Activated CD4-positive, alpha-beta T cell treated with anti-CD3 and anti-CD28 coated beads for 36 hours (primary cell): ENCODE measurements at regions of chr7 and their contacts with region 1.

Region 1: DNA sequence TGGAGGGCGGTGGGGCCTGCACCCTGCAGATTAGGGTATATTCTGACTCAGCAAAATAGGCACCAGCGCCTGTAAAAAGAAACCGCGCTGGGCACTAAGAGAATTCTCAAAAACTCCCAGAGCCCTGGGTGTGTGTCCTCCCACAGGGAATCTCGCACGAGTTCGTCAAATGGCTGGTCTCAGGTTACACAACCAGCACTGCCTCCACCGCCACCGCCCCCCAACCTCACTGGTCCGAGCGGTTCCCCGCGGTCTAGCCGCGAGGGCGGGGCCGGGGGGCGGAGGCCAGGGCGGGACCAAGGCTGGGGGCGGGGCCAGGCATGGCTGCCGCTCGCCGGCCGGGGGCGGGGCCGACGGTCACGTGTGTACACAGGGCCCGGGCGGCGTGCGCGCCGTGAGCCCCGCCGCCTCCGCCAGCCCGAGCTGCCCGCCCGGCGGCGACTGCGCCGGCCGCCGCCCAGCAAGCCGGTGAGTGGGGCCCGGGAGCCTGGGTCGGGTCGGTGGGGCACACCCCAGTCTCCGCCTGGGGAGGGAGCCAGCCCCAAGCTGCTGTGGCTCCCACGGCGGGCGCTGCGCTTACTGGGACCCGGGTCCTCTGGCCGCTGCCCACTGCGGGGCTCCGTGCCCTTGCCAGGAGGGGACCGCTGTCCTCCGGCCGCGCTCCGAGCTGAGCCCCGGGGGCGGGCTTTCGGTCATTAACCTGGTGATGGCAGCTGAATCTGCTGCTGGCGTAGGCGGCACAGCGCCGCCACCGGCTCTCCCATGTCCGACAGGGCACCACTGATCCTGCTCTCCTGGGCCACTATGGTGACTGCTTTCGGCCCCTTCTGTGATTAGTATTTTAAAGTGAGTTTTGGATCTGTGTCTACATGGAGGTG is at the start of gene GPR146:
- DNase-seq: peak; percentile 96
- ATAC-seq: peak; percentile 88
- H3K4me3 Mint-ChIP-seq: peak within 1 kb of the TSS; percentile 78
- H3K27ac Mint-ChIP-seq: peak within 1 kb of the TSS; percentile 73
- H3K4me1 Mint-ChIP-seq: peaks cover 61% of the 10 kb centered on the region
- H3K27me3 Mint-ChIP-seq: no peaks in the 10 kb centered on the region
- total RNA-seq, gene GPR146: 4.7 to 5.6 TPM

Region 2: GRCh38 chr7:148932-149855 is 895.2 kb before region 1 on chr7:
- CTCF ChIA-PET with region 1: no interaction called
- POLR2A ChIA-PET with region 1: no interaction called
- intact Hi-C with region 1: loop called in 1 of 2 experiments (anchors 5 kb)
- DNase-seq: peak; percentile 98
- ATAC-seq: peak; percentile 99
- H3K4me3 Mint-ChIP-seq: peak overlapping the region; percentile 87
- H3K27ac Mint-ChIP-seq: peak overlapping the region; percentile 97
- H3K4me1 Mint-ChIP-seq: peaks cover 13% of the 10 kb centered on the region
- H3K27me3 Mint-ChIP-seq: no peaks in the 10 kb centered on the region

Region 3: DNA sequence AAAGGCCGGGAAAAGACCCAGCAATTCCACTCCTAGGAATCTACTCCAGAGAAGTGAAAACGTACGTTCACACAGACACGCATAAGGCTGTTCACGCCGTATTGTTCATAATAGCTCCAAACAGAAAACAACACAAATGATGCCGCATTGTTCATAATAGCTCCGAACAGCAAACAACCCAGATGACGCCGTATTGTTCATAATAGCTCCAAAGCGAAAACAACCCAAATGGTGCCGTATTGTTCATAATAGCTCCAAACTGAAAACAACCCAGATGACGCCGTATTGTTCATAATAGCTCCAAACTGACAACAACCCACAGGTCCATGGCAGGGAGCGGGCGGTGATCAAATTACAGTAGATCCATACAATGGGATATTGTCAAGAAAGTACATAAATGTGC is 403.2 kb before region 1 on chr7:
- CTCF ChIA-PET with region 1: no interaction called
- POLR2A ChIA-PET with region 1: no interaction called
- intact Hi-C with region 1: no loop called
- DNase-seq: no peak
- ATAC-seq: no peak
- H3K4me3 Mint-ChIP-seq: no peak overlapping the region
- H3K27ac Mint-ChIP-seq: no peak overlapping the region
- H3K4me1 Mint-ChIP-seq: peaks cover 19% of the 10 kb centered on the region
- H3K27me3 Mint-ChIP-seq: no peaks in the 10 kb centered on the region

Region 4: DNA sequence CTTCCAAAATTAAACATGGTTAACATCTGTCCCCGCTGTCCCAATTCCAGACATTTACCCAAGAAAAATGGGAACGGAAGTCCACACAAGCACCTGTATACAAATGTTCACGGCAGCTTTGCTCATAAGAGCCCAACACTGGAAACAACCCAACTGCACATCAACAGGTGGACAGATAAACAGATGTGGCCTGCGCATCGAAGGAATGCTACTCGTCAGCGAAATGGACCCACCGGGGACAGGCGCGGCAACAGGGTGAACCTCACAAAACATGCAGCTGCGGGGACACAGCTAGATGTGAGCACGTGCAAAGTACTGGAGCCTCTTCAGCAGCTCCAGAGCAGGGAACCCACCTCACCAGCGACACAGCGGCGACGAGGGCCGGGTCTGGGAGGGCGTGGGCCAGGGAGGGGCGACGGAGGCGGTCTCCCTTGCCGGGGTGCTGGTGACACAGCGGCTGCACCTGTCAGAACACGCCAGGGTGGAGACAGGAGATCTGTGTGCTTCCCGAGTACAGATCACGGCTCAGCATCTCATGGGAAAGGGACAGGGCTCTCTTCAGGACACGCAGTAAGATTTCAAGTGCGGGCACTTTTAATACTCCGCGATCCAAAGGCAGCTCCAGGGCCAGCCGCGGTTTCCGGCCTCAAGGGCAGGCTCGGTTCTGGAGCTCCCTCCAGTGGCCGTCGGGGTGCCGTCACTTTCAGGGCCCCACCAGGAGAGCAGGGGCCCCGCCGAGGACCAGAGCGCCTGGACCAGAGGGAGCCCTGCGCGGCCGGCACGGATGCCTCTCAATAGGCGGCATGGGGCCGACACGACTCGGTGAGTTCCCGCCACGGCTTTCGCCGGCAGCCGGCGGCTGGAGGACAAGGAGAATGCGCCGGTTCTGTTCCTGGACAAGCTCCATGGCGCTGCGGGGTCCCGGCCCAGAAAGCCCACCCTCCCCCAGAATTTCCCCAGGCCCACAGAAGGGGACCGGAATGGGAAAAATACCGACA is 21.1 kb after region 1 on chr7:
- CTCF ChIA-PET with region 1: interaction called, 15 read pairs
- POLR2A ChIA-PET with region 1: no interaction called
- intact Hi-C with region 1: no loop called
- DNase-seq: peak; percentile 92
- ATAC-seq: peak; percentile 98
- H3K4me3 Mint-ChIP-seq: peak overlapping the region; percentile 36
- H3K27ac Mint-ChIP-seq: no peak overlapping the region
- H3K4me1 Mint-ChIP-seq: peaks cover 5% of the 10 kb centered on the region
- H3K27me3 Mint-ChIP-seq: peaks cover 2% of the 10 kb centered on the region

Region 5: GRCh38 chr7:1159891-1160668 is 115.7 kb after region 1 on chr7 and contains the start of gene ZFAND2A:
- CTCF ChIA-PET with region 1: interaction called, 3 read pairs
- POLR2A ChIA-PET with region 1: no interaction called
- intact Hi-C with region 1: loop called in 1 of 2 experiments (anchors 5 kb)
- DNase-seq: peak; percentile 99
- ATAC-seq: peak; percentile 98
- H3K4me3 Mint-ChIP-seq: peak within 1 kb of the TSS; percentile 84
- H3K27ac Mint-ChIP-seq: peak within 1 kb of the TSS; percentile 90
- H3K4me1 Mint-ChIP-seq: peaks cover 22% of the 10 kb centered on the region
- H3K27me3 Mint-ChIP-seq: no peaks in the 10 kb centered on the region
- total RNA-seq, gene ZFAND2A: 21.6 to 25.2 TPM

Region 6: DNA sequence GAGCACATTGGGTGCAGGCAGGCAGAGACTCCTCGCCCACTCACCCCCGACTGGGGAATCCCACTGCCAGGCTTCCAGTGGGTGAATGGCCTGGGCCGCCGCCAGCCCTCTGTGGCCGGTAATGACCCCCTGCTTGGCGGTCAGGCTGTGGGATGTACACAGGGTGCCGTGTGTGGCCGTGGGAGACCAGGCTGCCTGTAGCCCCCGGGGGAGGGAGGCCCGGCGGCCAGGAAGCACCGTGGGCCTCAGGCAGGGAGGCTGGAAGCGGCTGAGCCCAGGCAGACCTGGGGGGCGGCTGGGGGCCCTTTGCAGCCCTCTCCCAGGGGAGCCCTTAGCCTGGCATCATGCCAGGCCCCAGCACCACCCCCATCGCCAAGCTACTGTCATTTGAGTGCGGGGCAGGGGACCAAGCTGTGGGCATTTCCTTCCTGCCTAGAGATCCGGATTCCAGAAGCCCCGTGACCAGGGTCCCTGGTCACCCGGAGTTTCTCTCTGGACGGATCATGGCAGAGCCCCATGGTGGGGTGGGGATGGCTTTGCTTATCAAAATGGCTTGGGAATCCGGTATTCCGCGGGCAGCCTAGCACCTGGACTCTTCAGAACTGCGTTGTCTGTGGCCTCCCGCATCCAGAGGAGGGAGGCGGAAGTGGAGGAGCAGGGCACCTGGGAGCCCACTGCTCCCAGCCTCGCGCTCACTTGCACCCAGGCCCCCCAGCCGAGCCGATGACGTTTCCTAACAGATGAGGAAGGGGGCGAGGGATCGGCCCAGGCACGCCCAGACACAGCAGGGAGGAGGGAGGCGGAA is 1588.5 kb after region 1 on chr7:
- CTCF ChIA-PET with region 1: no interaction called
- POLR2A ChIA-PET with region 1: no interaction called
- intact Hi-C with region 1: loop called in 1 of 2 experiments (anchors 10 kb)
- DNase-seq: peak; percentile 77
- ATAC-seq: peak; percentile 7
- H3K4me3 Mint-ChIP-seq: peak overlapping the region; percentile 91
- H3K27ac Mint-ChIP-seq: peak overlapping the region; percentile 84
- H3K4me1 Mint-ChIP-seq: peaks cover 14% of the 10 kb centered on the region
- H3K27me3 Mint-ChIP-seq: no peaks in the 10 kb centered on the region